K562 (cell line): ENCODE measurements at regions of chr10 and their contacts with region 1.

Region 1: DNA sequence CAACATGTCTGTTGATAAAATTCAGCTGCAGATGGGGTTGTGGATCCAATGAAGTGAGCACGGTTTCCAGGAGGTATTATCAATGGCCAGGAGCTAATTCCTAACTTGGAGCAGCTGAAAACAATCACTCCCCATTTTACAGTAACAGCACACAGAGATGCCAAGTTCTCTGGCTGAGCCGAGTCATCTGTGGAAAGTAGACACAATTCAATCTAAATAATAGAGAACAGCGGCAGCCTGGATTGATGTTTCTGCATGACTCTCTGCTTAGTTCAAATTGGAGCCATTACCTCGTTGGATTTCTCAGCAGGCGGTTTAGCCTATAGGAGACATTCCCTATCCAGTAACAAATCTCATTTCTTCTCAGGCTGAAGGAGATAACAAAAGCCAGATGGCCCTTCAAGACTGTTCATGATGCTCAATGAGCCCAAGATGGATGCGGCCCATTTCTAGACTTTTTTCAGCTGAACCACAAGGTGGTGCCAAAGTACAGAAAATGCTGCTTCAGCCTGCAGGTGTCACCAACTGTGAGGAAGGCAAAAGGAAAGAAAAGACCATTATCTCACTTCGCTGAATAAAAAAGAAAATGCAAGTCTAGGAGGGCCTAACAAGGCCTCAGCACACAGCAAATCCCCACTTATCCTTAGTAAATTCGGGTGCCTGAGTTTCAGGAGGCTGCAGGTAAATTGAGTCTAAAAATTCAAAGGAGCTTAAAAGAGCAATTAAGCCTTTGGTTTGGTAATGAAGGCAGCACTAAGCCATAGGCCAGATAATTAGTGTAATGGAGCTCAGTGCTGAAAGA is 83.7 kb downstream of the SLC16A9 start:
- DNase-seq: peak; percentile 63 to 78 (median 67)
- ATAC-seq: peak; percentile 91
- H3K4me3 ChIP-seq: no peak overlapping the region
- H3K27ac ChIP-seq: no peak overlapping the region
- H3K4me1 ChIP-seq: no peaks in the 10 kb centered on the region
- H3K27me3 ChIP-seq: no peaks in the 10 kb centered on the region; a peak in 1 of 5 replicates
- CTCF ChIP-seq: peak; percentile 84 to 98 (median 97)
- EP300 ChIP-seq: no peak
- POLR2A ChIP-seq: no peak
- RAD21 ChIP-seq: peak; percentile 97 to 99

Region 2: DNA sequence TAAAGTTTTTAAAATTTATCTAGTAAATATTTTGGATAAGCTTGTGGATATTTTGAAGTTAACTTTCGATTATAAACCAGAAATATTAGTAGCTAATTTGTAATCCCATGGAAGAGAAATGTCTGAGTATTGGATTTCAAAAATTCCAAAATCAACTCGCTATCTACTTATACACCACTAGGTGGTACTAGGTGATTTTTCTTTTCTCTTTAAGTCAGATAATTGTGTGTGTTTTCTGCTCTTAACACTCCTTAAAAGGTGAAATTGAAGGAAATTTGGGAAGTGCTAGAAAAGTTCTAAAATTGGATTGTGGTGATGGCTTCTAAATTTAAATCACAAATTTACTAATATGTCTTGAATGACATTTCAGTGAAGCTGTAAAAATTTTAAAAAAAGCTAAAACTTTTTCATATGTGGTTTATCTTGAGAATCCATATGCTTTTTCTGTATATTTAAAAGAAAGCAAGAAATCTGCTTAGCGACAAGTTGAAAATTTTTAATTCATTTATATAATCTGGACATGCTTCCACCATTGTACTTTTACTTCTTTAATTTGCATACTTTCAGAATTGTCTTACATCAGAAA is 1448.5 kb before region 1 on chr10:
- CTCF ChIA-PET with region 1: no interaction called
- POLR2A ChIA-PET with region 1: no interaction called
- in situ Hi-C with region 1: no loop called
- intact Hi-C with region 1: loop called (anchors 5 kb)
- DNase-seq: peak; percentile 17 to 42 (median 20)
- ATAC-seq: peak; percentile 58
- H3K4me3 ChIP-seq: no peak overlapping the region
- H3K27ac ChIP-seq: no peak overlapping the region
- H3K4me1 ChIP-seq: peaks cover 0 to 16% of the 10 kb centered on the region in 2 experiments; a peak in 2 of 5 replicates
- H3K27me3 ChIP-seq: no peaks in the 10 kb centered on the region
- CTCF ChIP-seq: peak in 2 of 3 experiments; percentile 56 to 83; a peak in 4 of 6 replicates
- EP300 ChIP-seq: no peak
- POLR2A ChIP-seq: no peak
- RAD21 ChIP-seq: peak; percentile 84 to 90

Region 3: DNA sequence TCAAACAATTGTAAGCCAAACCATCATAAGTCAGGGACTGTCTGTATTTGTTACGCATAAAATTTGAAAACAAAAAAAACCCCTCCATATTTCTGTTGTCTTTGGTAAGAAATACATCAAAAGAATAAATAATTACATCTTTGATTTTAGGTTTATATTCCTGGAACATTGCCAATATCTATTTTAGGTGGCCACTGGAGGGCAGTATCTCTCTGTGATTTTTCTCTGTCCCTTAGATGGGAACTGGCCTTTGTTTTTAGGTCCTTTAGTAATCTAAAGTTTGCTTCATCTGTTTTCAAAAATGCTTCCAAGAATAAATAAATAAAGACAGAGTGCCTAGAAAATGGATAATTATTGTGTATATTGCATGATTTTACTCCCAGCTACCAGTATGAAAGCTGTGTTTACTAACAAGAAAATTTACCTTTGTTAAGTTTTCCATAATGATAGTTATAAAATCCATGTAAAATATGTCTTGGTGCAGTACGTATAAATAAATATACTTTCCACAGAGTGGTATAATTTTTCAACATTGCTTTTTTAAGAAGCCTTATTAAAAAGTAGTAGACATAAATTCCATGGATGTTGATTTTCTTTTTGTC is 385.2 kb before region 1 on chr10:
- CTCF ChIA-PET with region 1: no interaction called
- POLR2A ChIA-PET with region 1: no interaction called
- in situ Hi-C with region 1: no loop called
- intact Hi-C with region 1: loop called (anchors 1 kb)
- DNase-seq: peak; percentile 25 to 59 (median 46)
- ATAC-seq: no peak
- H3K4me3 ChIP-seq: no peak overlapping the region
- H3K27ac ChIP-seq: no peak overlapping the region
- H3K4me1 ChIP-seq: no peaks in the 10 kb centered on the region
- H3K27me3 ChIP-seq: no peaks in the 10 kb centered on the region
- CTCF ChIP-seq: peak; percentile 27 to 63 (median 42); a peak in 5 of 6 replicates
- EP300 ChIP-seq: no peak
- POLR2A ChIP-seq: no peak
- RAD21 ChIP-seq: peak; percentile 35 to 71

Region 4: DNA sequence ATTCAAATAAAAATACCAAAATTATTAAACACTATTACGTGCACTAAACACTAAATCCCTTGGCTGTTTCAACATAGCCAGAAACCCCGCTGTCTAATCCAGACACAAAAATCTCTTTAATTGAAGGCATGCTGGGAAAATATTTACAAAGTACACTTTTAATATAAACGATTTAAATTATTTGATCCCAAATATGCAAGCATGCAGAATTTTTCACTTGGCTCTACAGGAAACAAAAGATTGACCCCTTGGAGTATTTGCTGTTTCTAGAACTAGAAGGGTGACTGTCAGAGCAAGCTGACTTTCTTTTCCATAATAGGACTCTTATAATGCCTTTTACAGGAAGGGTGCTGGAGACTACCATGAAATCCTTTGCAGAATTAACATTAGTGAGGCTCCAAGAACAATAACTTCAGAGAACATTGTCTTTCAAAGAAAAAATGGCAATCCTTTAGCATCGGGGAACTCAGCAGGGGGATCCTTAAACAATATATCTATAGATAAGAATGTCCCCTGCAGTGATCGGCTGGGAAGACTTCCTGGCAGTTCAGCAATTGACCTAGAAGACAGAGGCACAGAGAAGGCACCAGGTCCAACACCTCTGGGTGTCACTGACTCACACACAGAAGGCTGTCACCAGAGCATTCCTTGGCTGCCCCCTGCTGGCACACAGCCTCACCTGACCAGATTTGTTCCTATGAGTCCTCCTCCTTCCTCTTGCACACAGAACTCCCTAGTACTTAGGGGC is 183.1 kb after region 1 on chr10:
- CTCF ChIA-PET with region 1: interaction called, 17 read pairs
- POLR2A ChIA-PET with region 1: interaction called, 3 read pairs
- in situ Hi-C with region 1: loop called (anchors 5 kb)
- intact Hi-C with region 1: loop called (anchors 1 kb)
- DNase-seq: peak; percentile 64 to 85 (median 71)
- ATAC-seq: peak; percentile 98
- H3K4me3 ChIP-seq: no peak overlapping the region
- H3K27ac ChIP-seq: no peak overlapping the region
- H3K4me1 ChIP-seq: no peaks in the 10 kb centered on the region
- H3K27me3 ChIP-seq: no peaks in the 10 kb centered on the region; a peak in 1 of 5 replicates
- CTCF ChIP-seq: peak; percentile 88 to 90 (median 89)
- EP300 ChIP-seq: no peak
- POLR2A ChIP-seq: no peak
- RAD21 ChIP-seq: peak; percentile 81 to 85

Region 5: GRCh38 chr10:60032723-60033122 is 406.8 kb after region 1 on chr10:
- CTCF ChIA-PET with region 1: interaction called, 6 read pairs
- POLR2A ChIA-PET with region 1: interaction called, 5 read pairs
- in situ Hi-C with region 1: no loop called
- intact Hi-C with region 1: loop called (anchors 1 kb)
- DNase-seq: peak in 2 of 4 experiments; percentile 44 to 71
- ATAC-seq: peak; percentile 77
- H3K4me3 ChIP-seq: no peak overlapping the region
- H3K27ac ChIP-seq: no peak overlapping the region
- H3K4me1 ChIP-seq: peaks cover 3 to 15% of the 10 kb centered on the region in 2 experiments; a peak in 4 of 5 replicates
- H3K27me3 ChIP-seq: no peaks in the 10 kb centered on the region
- CTCF ChIP-seq: peak; percentile 57 to 85 (median 71); a peak in 5 of 6 replicates
- EP300 ChIP-seq: no peak
- POLR2A ChIP-seq: no peak
- RAD21 ChIP-seq: peak; percentile 86 to 92

Region 6: DNA sequence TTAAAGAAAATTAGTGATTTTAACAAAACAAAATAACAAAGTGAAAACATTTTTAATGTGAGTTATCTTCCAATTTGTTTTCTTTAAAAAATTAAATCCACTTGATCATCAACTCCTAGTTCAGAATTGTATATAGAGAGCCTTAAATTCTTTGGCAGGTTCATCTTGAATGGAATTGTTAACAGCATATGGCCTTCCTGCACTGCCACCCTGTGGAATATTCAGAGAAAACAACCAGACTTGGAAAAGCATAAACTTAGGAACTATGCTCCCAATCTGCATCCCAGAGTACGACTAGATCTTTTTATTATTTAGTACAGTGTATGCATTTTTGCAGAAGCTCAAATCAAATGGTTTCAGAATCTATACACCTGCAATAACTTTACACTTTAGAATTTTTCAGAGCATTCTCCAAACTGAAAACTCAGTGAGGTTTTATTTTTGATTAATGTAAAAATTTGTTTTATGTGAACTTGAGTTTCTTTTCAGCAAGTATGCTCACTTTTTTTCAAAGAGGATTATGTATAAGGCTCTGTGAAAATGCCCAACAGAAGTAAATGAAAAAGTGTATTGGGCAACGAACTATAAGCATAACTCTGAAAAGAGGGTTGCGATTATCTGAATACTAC is 808.6 kb after region 1 on chr10:
- CTCF ChIA-PET with region 1: interaction called, 3 read pairs
- POLR2A ChIA-PET with region 1: no interaction called
- in situ Hi-C with region 1: loop called (anchors 25 kb)
- intact Hi-C with region 1: loop called (anchors 5 kb)
- DNase-seq: peak; percentile 53 to 72 (median 57)
- ATAC-seq: peak; percentile 87
- H3K4me3 ChIP-seq: no peak overlapping the region
- H3K27ac ChIP-seq: no peak overlapping the region
- H3K4me1 ChIP-seq: peaks cover 0 to under 1% of the 10 kb centered on the region in 2 experiments; a peak in 1 of 5 replicates
- H3K27me3 ChIP-seq: no peaks in the 10 kb centered on the region
- CTCF ChIP-seq: peak; percentile 71 to 92 (median 73); a peak in 5 of 6 replicates
- EP300 ChIP-seq: no peak
- POLR2A ChIP-seq: no peak
- RAD21 ChIP-seq: peak; percentile 99